Activated naive CD4-positive, alpha-beta T cell treated with anti-CD3 and anti-CD28 coated beads for 36 hours (primary cell): ENCODE measurements at regions of chr1 and their contacts with region 1.

Region 1: GRCh38 chr1:172837816-172838680 is 179.1 kb downstream of the FASLG start:
- DNase-seq: peak; percentile 46
- H3K4me3 Mint-ChIP-seq: no peak overlapping the region
- H3K27ac Mint-ChIP-seq: no peak overlapping the region
- H3K4me1 Mint-ChIP-seq: peaks cover 19% of the 10 kb centered on the region
- H3K27me3 Mint-ChIP-seq: peaks cover 25% of the 10 kb centered on the region

Region 2: GRCh38 chr1:172487550-172487949 is 350.5 kb before region 1 on chr1:
- CTCF ChIA-PET with region 1: no interaction called
- intact Hi-C with region 1: no loop called
- DNase-seq: no peak
- H3K4me3 Mint-ChIP-seq: no peak overlapping the region
- H3K27ac Mint-ChIP-seq: no peak overlapping the region
- H3K4me1 Mint-ChIP-seq: peaks cover 13% of the 10 kb centered on the region
- H3K27me3 Mint-ChIP-seq: no peaks in the 10 kb centered on the region

Region 3: DNA sequence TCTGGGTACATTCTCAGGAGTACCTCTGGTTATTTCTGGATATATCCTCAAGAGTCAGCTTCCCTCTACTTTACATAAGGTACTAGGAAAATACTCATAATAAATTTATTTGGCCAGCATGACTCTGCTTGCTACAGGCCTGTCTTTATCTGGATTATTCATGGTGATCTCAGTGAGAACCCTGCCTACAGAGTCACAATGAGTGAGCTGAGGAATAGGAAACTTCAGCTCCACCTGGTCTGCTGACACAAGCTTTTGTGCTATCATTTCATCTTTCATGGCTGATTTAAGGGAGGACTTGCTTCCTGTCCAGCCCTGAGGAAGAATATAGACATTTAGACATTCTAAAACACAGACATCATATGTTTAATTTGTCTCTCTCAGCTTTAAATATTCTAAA is 324.6 kb before region 1 on chr1:
- CTCF ChIA-PET with region 1: no interaction called
- intact Hi-C with region 1: no loop called
- DNase-seq: no peak
- H3K4me3 Mint-ChIP-seq: no peak overlapping the region
- H3K27ac Mint-ChIP-seq: no peak overlapping the region
- H3K4me1 Mint-ChIP-seq: no peaks in the 10 kb centered on the region
- H3K27me3 Mint-ChIP-seq: no peaks in the 10 kb centered on the region

Region 4: DNA sequence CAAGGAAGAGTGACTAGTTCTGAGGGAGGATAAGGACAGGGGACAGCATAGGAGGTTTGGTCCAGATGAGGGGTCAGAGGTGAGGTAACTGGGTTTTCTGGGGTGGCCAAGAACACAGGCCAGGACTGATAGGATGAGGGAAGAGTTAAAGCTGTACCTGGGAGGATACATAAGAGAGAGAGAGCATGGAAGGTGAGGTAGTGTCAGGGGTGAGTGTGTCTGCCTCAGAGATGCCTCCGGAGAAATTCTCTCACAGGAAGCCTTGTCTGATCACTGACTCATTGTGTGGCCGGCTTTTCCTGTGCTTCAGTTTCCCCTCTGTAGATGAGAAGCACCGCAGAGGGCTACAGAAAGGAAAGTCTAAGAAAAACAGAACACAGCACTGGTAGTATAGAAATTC is 138.9 kb before region 1 on chr1:
- CTCF ChIA-PET with region 1: no interaction called
- intact Hi-C with region 1: loop called (anchors 1 kb)
- DNase-seq: peak; percentile 88
- H3K4me3 Mint-ChIP-seq: peak overlapping the region; percentile 36
- H3K27ac Mint-ChIP-seq: peak overlapping the region; percentile 89
- H3K4me1 Mint-ChIP-seq: peaks cover 53% of the 10 kb centered on the region
- H3K27me3 Mint-ChIP-seq: no peaks in the 10 kb centered on the region

Region 5: GRCh38 chr1:172870901-172871606 is 33.0 kb after region 1 on chr1:
- CTCF ChIA-PET with region 1: no interaction called
- intact Hi-C with region 1: loop called (anchors 1 kb)
- DNase-seq: no peak
- H3K4me3 Mint-ChIP-seq: no peak overlapping the region
- H3K27ac Mint-ChIP-seq: no peak overlapping the region
- H3K4me1 Mint-ChIP-seq: peaks cover 32% of the 10 kb centered on the region
- H3K27me3 Mint-ChIP-seq: peaks cover 24% of the 10 kb centered on the region

Region 6: DNA sequence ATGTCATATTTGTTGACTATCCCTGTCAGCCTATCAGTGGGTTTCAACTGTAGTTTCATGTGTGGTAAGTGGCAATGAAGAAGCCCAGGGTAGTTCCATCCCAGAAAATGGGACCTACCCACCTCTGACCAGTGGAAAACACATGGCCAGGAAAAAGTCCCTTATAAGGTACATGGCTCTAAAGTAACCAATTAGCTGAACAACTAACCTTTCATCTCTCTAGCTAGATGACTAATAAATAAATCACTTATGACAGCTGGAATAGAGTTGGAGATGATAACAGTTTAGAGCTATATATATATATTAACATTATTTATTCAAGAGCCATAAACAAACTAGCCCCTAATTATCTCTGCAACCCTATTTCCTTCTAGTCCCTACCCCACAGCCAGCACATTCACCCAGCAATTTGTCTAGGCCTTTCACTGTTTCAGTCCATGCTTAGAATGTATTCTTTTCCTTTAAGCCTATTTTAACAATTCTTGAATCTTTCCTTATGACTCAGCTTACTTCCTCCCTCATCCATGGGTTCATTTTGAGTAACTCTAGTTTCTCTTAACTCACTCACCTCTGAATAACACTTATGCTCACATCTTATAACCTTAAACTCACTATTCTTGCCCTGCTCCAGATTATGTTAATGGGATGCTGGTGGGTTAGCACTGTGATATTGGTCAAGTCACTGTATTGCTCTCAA is 128.9 kb after region 1 on chr1:
- CTCF ChIA-PET with region 1: no interaction called
- intact Hi-C with region 1: loop called (anchors 1 kb)
- DNase-seq: no peak
- H3K4me3 Mint-ChIP-seq: no peak overlapping the region
- H3K27ac Mint-ChIP-seq: no peak overlapping the region
- H3K4me1 Mint-ChIP-seq: peaks cover 18% of the 10 kb centered on the region
- H3K27me3 Mint-ChIP-seq: peaks cover 2% of the 10 kb centered on the region

Region 7: DNA sequence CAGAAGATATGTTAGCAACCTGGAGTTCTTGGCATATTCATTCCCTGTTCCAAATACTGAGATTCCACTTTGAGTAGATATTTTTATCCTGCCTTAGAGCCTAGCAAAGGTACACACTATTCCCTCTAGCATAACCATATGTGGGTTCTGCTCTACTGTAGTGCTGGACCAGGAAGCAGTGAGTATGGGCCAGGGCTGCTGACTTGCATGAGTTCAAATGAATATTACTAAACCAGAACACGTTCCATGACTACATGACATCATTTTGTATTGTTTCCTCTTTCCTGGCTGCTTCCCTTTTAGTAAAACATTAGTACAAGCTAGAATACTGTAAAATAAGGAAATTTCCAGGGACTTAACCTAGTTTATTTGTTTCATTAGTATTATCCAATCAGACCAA is 171.5 kb after region 1 on chr1:
- CTCF ChIA-PET with region 1: no interaction called
- intact Hi-C with region 1: no loop called
- DNase-seq: no peak
- H3K4me3 Mint-ChIP-seq: no peak overlapping the region
- H3K27ac Mint-ChIP-seq: no peak overlapping the region
- H3K4me1 Mint-ChIP-seq: peaks cover 12% of the 10 kb centered on the region
- H3K27me3 Mint-ChIP-seq: no peaks in the 10 kb centered on the region

Region 8: DNA sequence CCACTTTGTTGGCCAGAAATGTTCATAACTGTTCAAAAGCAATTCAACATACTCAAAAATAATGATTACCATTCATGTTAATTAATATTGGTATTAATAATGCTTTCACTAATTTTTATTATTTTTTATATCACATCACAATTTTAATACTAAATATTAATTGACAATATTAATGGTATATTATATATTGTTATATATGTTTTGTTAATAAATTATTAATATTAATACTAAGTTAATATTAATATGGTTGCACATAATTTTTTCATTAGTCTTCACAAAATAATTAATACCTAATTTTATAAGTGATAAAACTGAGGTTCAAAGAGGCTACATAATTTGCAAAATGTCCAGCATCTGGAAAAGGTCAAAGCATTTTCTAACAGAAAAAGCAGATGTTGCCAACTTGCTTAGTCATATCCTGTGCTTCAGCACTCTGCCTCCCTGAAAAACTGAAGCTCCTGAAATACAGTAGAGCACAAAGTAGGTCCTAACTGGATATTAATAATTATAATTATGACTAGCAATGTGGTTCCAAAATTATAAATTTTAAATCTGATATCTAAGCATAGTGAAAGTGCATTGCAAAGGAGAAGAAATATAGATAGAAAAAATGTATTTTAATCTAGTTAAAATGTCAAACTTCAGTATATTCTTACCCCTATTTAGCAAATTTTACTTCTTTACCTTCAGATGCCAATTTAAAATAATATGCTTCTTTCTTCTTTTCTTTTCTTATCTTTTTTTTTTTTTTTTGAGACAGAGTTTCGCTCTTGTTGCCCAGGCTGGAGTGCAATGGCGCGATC is 492.3 kb after region 1 on chr1:
- CTCF ChIA-PET with region 1: no interaction called
- intact Hi-C with region 1: loop called (anchors 1 kb)
- DNase-seq: no peak
- H3K4me3 Mint-ChIP-seq: no peak overlapping the region
- H3K27ac Mint-ChIP-seq: no peak overlapping the region
- H3K4me1 Mint-ChIP-seq: peaks cover 25% of the 10 kb centered on the region
- H3K27me3 Mint-ChIP-seq: no peaks in the 10 kb centered on the region